Right lobe of liver (tissue), 6 donors: ENCODE measurements at regions of chr1 and their contacts with region 1.

Region 1: GRCh38 chr1:67149179-67149770 is 14.5 kb upstream of the C1orf141 start:
- DNase-seq: peak in 2 of 3 donors; percentile 51 to 69
- ATAC-seq: peak; percentile 98 to 100 (median 100)
- H3K4me3 ChIP-seq: no peak overlapping the region
- H3K27ac ChIP-seq: no peak overlapping the region
- H3K4me1 ChIP-seq: peaks cover 0 to 5% (median 0%) of the 10 kb centered on the region in 4 donors
- H3K27me3 ChIP-seq: no peaks in the 10 kb centered on the region
- CTCF ChIP-seq: peak; percentile 78 to 83 (median 80)
- POLR2A ChIP-seq: no peak

Region 2: DNA sequence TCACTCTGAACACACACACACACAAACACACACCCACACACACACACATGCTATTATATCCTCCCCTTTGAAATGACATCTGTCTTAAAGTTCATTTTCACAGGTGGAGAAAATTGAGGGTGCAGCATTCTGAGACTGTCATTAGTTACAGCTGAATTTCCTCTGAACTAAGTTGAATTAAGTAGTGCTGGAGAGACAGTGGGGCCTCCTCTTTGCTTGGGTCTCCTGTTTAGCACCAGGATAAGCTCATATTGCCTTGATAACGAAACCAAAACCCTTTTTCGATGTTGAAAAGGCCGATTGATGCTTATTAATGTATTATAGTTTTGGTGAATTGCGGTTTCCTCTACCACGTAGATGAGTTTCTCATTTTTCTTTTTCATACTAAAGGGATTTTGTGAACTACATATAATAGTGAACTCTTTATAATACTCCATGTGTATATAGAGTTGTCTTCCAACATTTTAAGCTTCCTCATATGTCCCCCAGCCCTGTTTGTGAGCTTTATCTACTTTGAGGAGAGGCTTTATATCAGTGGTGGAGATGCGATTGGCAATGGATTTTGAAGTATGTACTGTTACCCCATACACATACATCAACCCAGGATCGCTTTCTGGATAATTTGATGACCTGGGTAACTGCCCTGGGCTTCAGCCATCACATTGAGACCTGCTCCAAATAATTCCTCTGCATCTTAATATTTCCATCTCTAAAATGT is 379.6 kb before region 1 on chr1:
- intact Hi-C with region 1: loop called in 1 of 2 experiments (anchors 10 kb)
- DNase-seq: no peak
- ATAC-seq: no peak
- H3K4me3 ChIP-seq: no peak overlapping the region
- H3K27ac ChIP-seq: no peak overlapping the region
- H3K4me1 ChIP-seq: no peaks in the 10 kb centered on the region
- H3K27me3 ChIP-seq: no peaks in the 10 kb centered on the region
- CTCF ChIP-seq: no peak
- POLR2A ChIP-seq: no peak

Region 3: GRCh38 chr1:66996018-66996682 is 153.1 kb before region 1 on chr1:
- intact Hi-C with region 1: loop called in 1 of 2 experiments (anchors 10 kb)
- DNase-seq: no peak
- ATAC-seq: peak; percentile 81 to 90 (median 86)
- H3K4me3 ChIP-seq: no peak overlapping the region
- H3K27ac ChIP-seq: no peak overlapping the region
- H3K4me1 ChIP-seq: no peaks in the 10 kb centered on the region
- H3K27me3 ChIP-seq: no peaks in the 10 kb centered on the region
- CTCF ChIP-seq: peak; percentile 67 to 74 (median 70)
- POLR2A ChIP-seq: no peak